ENCODE measurements at regions of chr10 and their contacts with region 1.

Region 1: GRCh38 chr10:113788604-113789083 is 37.2 kb downstream of the PLEKHS1 start:
- DNase-seq: peak; percentile 93
- H3K4me3 ChIP-seq: no peak overlapping the region
- H3K27ac ChIP-seq: no peak overlapping the region
- H3K27me3 ChIP-seq: no peaks in the 10 kb centered on the region
- CTCF ChIP-seq: no peak

Region 2: GRCh38 chr10:113843972-113844485 is 55.4 kb after region 1 on chr10:
- in situ Hi-C with region 1: no loop called
- DNase-seq: no peak
- H3K4me3 ChIP-seq: no peak overlapping the region
- H3K27ac ChIP-seq: no peak overlapping the region
- H3K27me3 ChIP-seq: no peaks in the 10 kb centered on the region
- CTCF ChIP-seq: no peak

Region 3: DNA sequence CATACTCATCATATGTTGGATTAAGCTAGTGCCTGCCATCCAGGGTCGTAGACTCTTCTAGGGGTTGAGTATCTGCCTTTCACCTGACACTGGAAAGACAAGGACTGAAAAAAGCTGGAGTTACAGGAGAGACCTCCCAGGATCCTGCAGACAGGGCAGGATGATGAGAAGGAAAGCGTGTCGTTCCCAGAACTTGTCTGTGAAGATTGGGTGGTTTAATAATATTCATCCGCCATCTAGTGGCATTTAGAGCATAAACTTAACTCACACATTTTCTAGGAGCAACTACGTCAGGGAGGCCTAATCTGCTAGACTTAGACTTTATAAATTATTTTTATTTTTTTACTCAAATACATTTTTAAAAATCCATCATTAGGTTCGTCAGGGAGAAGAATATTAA is 314.6 kb after region 1 on chr10:
- in situ Hi-C with region 1: loop called (anchors 25 kb)
- DNase-seq: peak; percentile 42
- H3K4me3 ChIP-seq: no peak overlapping the region
- H3K27ac ChIP-seq: no peak overlapping the region
- H3K27me3 ChIP-seq: no peaks in the 10 kb centered on the region
- CTCF ChIP-seq: peak; percentile 50